ENCODE measurements at regions of chr14 and their contacts with region 1.

Region 1: DNA sequence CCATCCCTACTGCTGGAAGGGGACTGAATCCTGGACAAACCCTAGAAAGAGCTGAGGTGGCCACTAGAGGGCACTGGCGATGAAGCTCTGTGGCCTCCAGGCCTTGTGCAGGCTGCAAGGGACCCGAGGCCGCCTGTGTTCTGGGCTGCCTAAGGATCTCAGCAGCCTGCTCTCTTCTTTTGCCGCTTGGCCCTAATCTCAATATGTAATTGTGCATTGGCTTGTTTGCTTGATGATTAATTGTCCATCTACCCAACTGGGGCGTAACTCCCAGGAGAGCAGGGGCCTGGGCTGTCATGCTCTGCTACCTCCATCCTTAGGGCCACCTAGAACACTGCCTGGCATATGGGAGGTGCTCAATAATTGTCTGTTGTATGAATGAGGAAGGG is 73.8 kb downstream of the SYNE3 start:
- DNase-seq: peak; percentile 88
- H3K4me3 ChIP-seq: peak overlapping the region in 1 of 2 experiments; percentile 24; a peak in 1 of 4 replicates
- H3K27ac ChIP-seq: no peak overlapping the region
- H3K4me1 ChIP-seq: peaks cover 4 to 45% of the 10 kb centered on the region in 2 experiments; a peak in 3 of 4 replicates
- H3K27me3 ChIP-seq: no peaks in the 10 kb centered on the region
- CTCF ChIP-seq: peak; percentile 87
- EP300 ChIP-seq: no peak
- RAD21 ChIP-seq: peak; percentile 91

Region 2: GRCh38 chr14:95291859-95292542 is 150.6 kb before region 1 on chr14:
- CTCF ChIA-PET with region 1: no interaction called
- POLR2A ChIA-PET with region 1: no interaction called
- DNase-seq: peak; percentile 48
- H3K4me3 ChIP-seq: no peak overlapping the region
- H3K27ac ChIP-seq: no peak overlapping the region
- H3K4me1 ChIP-seq: peaks cover 9 to 21% of the 10 kb centered on the region in 2 experiments; a peak in 2 of 4 replicates
- H3K27me3 ChIP-seq: no peaks in the 10 kb centered on the region
- CTCF ChIP-seq: no peak
- EP300 ChIP-seq: no peak
- RAD21 ChIP-seq: no peak

Region 3: GRCh38 chr14:95395098-95395737 is 47.4 kb before region 1 on chr14:
- CTCF ChIA-PET with region 1: no interaction called
- POLR2A ChIA-PET with region 1: no interaction called
- DNase-seq: no peak
- H3K4me3 ChIP-seq: no peak overlapping the region
- H3K27ac ChIP-seq: no peak overlapping the region
- H3K4me1 ChIP-seq: peaks cover 0 to 13% of the 10 kb centered on the region in 2 experiments; a peak in 1 of 4 replicates
- H3K27me3 ChIP-seq: no peaks in the 10 kb centered on the region
- CTCF ChIP-seq: no peak
- EP300 ChIP-seq: no peak
- RAD21 ChIP-seq: no peak

Region 4: GRCh38 chr14:95507701-95508103 is 65.1 kb after region 1 on chr14:
- CTCF ChIA-PET with region 1: interaction called, 97 read pairs
- POLR2A ChIA-PET with region 1: interaction called, 3 read pairs
- DNase-seq: peak; percentile 55
- H3K4me3 ChIP-seq: no peak overlapping the region
- H3K27ac ChIP-seq: peak overlapping the region; percentile 83 to 93
- H3K4me1 ChIP-seq: peaks cover 19 to 40% of the 10 kb centered on the region in 2 experiments
- H3K27me3 ChIP-seq: no peaks in the 10 kb centered on the region
- CTCF ChIP-seq: no peak
- EP300 ChIP-seq: no peak; a peak in 1 of 4 replicates
- RAD21 ChIP-seq: no peak

Region 5: DNA sequence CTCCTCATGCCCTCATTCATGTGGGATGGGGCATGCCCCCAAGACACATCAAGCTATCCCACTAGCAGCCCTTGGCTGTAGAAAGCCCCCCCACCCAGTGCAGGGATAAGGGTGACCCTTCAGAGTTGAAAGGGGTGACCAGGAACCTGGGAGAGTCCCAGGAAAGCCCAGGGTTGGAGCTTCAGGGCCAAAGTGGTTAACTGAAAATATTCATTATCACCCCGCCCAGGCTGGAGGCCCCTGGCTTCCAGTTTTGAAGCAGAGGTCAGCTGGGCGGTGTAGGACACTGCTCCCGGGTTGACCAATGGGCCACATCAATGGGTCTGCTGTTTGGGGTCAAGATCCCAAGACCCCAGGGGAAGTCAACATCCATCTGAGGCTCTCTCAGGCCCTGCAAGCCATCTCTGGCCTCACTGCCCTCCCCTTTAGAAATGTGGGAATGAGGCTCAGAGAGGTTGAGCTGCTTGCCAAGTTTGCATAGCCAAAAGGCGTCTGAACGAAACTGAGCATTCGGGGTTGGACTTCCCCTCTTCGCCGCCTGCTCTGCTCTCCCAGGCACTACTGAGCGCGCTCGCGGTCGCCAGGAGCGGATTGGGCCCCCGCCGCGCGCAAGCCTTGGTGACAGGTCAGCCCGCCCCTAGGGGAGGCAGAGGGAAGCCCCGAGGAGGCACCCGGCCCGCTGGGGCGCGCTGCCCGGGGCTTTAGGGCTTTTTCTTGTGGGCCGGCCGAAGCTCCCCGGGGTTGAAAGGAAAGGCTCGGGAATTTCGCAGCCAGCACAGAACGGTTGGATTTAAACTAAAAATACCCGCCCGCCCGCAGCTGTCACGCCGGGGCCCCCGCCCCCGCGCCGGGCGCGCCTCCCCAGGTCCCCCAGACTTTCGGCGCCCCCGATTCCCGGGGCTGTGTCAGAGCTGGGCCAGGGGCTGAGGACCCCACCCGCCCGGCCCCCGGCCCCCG is 73.2 kb after region 1 on chr14:
- CTCF ChIA-PET with region 1: interaction called, 97 read pairs
- POLR2A ChIA-PET with region 1: interaction called, 5 read pairs
- DNase-seq: peak; percentile 87
- H3K4me3 ChIP-seq: peak overlapping the region; percentile 61 to 76
- H3K27ac ChIP-seq: no peak overlapping the region; a peak in 2 of 4 replicates
- H3K4me1 ChIP-seq: peaks cover 47 to 51% of the 10 kb centered on the region in 2 experiments
- H3K27me3 ChIP-seq: no peaks in the 10 kb centered on the region
- CTCF ChIP-seq: peak; percentile 46
- EP300 ChIP-seq: no peak
- RAD21 ChIP-seq: peak; percentile 12; the same call in 1 of the 2 replicates

Region 6: GRCh38 chr14:95534299-95535225 is 91.9 kb after region 1 on chr14 and contains the start of gene GLRX5:
- CTCF ChIA-PET with region 1: interaction called, 254 read pairs
- POLR2A ChIA-PET with region 1: interaction called, 4 read pairs
- DNase-seq: peak; percentile 99
- H3K4me3 ChIP-seq: peak within 1 kb of the TSS; percentile 91 to 95
- H3K27ac ChIP-seq: peak within 1 kb of the TSS; percentile 87 to 94
- H3K4me1 ChIP-seq: peaks cover 23 to 42% of the 10 kb centered on the region in 2 experiments
- H3K27me3 ChIP-seq: no peaks in the 10 kb centered on the region
- CTCF ChIP-seq: no peak
- EP300 ChIP-seq: no peak
- RAD21 ChIP-seq: no peak
- polyA plus RNA-seq, gene GLRX5: 29.1 and 31.4 TPM in 2 replicates

Measured in SK-N-SH (cell line).